ENCODE measurements at regions of chr19 and their contacts with region 1.

Region 1: GRCh38 chr19:47256688-47257443 is 541 bp downstream of the CCDC9 start:
- DNase-seq: peak; percentile 99
- H3K4me3 Mint-ChIP-seq: peak overlapping the region; percentile 97
- H3K27ac Mint-ChIP-seq: peak overlapping the region; percentile 99
- H3K4me1 Mint-ChIP-seq: peaks cover 26% of the 10 kb centered on the region
- H3K27me3 Mint-ChIP-seq: no peaks in the 10 kb centered on the region
- CTCF ChIP-seq: no peak

Region 2: DNA sequence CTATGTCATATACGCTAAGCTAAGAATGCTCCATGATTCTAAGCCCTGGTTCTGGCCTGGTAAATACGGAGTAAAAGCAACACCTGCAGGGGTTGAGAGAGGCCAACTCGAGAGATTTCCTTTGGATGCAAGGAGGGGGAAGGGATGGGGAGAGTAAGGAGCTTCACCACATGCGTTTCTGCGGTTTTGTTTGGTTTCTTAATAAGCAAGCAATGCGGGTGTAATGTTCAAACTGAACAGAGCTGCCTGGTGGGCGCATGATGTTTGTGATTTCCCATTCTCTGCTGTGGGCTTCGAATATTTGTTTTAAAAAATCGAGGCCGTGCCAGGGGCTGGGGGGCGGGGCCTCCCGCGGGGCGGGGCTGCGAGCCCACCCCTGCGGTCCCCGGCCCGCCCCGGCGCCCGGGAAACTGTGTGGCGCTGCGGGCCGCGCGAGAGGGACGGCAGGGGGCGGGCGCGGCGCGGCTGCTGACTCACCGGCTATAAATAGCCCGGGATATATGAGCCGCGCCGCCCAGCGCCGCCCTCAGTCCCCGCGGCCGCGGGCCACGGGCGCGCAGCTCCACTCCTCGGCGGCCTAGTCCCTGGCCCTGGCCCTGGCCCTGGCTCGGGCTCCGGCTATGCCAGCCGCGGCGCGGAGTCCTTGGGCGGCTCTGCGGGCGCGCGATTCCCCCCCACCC is 31.0 kb before region 1 on chr19:
- CTCF ChIA-PET with region 1: interaction called, 4 read pairs
- POLR2A ChIA-PET with region 1: interaction called, 22 read pairs
- intact Hi-C with region 1: no loop called
- DNase-seq: peak; percentile 85
- H3K4me3 Mint-ChIP-seq: peak overlapping the region; percentile 45
- H3K27ac Mint-ChIP-seq: no peak overlapping the region
- H3K4me1 Mint-ChIP-seq: peaks cover 6% of the 10 kb centered on the region
- H3K27me3 Mint-ChIP-seq: no peaks in the 10 kb centered on the region
- CTCF ChIP-seq: peak; percentile 26

Region 3: DNA sequence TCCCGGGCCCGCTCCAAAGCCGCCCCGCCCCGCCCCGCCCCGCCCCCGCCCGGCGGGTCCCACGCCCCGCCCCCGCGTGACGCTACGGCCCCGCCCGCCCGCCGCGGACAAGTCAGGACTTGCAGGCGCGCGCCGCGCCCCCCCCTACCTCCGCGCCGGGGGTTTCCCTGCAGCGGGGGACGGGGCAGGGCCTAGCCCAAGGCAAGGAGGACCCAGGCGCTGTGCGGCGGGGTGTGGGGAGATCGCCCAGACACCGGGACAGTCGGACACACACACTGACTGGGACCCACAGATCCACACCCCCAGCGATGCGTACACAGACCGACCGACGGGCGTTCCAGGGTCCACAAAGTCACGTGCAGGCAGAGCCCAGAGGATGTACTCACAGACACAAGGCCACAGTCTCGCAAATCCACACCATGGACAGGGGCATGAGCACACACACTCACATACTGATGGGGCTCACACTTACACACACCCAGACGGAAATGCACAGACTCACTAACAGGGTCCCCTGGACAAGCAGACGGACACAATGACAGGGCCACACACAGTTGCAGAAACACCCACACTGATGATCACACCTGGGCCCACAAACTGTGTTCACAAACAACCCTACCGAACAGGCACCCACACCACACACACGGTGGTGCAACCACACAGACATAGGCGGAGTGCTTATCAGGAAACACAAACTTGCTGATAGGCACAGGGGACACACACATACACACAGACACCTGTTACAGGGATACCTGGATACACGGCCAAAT is 25.5 kb before region 1 on chr19:
- CTCF ChIA-PET with region 1: interaction called, 4 read pairs
- POLR2A ChIA-PET with region 1: interaction called, 22 read pairs
- intact Hi-C with region 1: no loop called
- DNase-seq: peak; percentile 76
- H3K4me3 Mint-ChIP-seq: no peak overlapping the region
- H3K27ac Mint-ChIP-seq: peak overlapping the region; percentile 87
- H3K4me1 Mint-ChIP-seq: peaks cover 12% of the 10 kb centered on the region
- H3K27me3 Mint-ChIP-seq: no peaks in the 10 kb centered on the region
- CTCF ChIP-seq: no peak

Region 4: GRCh38 chr19:47267350-47267759 is 10.5 kb after region 1 on chr19:
- CTCF ChIA-PET with region 1: interaction called, 4 read pairs
- POLR2A ChIA-PET with region 1: interaction called, 16 read pairs
- intact Hi-C with region 1: no loop called
- DNase-seq: no peak
- H3K4me3 Mint-ChIP-seq: no peak overlapping the region
- H3K27ac Mint-ChIP-seq: no peak overlapping the region
- H3K4me1 Mint-ChIP-seq: peaks cover 4% of the 10 kb centered on the region
- H3K27me3 Mint-ChIP-seq: no peaks in the 10 kb centered on the region
- CTCF ChIP-seq: no peak

Region 5: GRCh38 chr19:47273313-47273977 is 16.6 kb after region 1 on chr19:
- CTCF ChIA-PET with region 1: interaction called, 4 read pairs
- POLR2A ChIA-PET with region 1: interaction called, 53 read pairs
- intact Hi-C with region 1: loop called (anchors 2 kb)
- DNase-seq: peak; percentile 89
- H3K4me3 Mint-ChIP-seq: peak overlapping the region; percentile 79
- H3K27ac Mint-ChIP-seq: peak overlapping the region; percentile 77
- H3K4me1 Mint-ChIP-seq: peaks cover 16% of the 10 kb centered on the region
- H3K27me3 Mint-ChIP-seq: no peaks in the 10 kb centered on the region
- CTCF ChIP-seq: no peak